CD4-positive, alpha-beta T cell (primary cell): ENCODE measurements at regions of chr11 and their contacts with region 1.

Region 1: DNA sequence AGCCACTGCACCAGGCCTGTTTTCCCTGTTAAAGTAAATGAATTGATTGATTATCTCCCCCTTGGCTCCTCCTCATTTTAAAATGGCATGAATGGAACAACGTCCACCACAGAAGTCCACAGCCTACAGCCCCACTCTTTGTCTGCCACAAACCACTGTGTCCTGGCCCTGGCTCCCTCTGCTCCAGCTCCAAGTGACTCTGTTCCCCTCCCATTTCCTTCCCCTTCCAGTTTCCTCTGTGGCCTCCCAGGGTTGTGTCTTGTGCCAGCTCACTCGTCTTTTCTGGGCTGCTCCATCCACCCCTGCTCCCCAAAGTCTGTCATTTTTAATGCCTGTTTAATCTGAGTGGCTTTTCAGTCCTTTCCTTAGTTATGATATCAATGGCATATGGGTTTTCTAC is 52.4 kb upstream of the CD5 start:
- DNase-seq: no peak
- ATAC-seq: no peak
- H3K4me3 ChIP-seq: no peak overlapping the region
- H3K4me3 Mint-ChIP-seq: no peak overlapping the region
- H3K27ac ChIP-seq: no peak overlapping the region
- H3K27ac Mint-ChIP-seq: peak overlapping the region; percentile 81
- H3K4me1 ChIP-seq: peaks cover 44% of the 10 kb centered on the region
- H3K4me1 Mint-ChIP-seq: peaks cover 76% of the 10 kb centered on the region
- H3K27me3 ChIP-seq: no peaks in the 10 kb centered on the region
- H3K27me3 Mint-ChIP-seq: no peaks in the 10 kb centered on the region
- CTCF ChIP-seq: no peak

Region 2: DNA sequence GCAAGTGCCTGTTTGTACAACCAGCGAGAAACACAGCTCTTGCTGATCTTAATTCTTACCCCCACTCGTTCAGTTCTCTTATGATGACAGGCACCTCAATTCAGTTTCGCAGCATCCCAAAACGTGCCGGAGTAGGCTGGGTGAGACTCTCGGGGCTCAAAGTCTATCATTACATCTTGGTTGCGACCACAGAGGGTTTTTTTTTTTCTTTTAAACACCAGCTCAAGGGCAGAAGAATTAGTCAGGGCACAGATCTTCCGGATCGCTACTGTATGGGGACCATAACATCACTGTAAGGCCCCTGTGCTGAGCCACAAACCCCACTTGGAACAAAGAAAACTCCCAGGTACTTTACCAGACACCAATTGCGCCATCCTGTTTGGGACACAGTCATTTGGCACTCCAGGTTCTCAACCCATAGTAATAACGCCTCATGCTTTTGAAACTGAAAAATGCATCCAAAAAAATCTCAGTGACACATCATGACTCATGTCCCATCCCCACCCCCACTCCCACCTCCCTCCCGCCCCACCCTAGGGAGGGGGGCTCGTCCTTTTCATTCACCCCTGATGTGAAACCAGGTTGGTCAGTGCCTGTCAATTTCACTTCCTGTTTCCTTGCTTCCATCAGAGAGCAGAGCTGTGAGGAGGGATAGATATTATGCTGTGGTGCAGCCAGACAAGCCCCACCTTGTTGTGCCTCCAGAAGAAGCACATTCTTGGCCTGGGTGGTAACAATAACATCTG is 11.4 kb after region 1 on chr11:
- CTCF ChIA-PET with region 1: interaction called, 6 read pairs
- POLR2A ChIA-PET with region 1: interaction called, 64 read pairs
- intact Hi-C with region 1: loop called in 1 of 2 experiments (anchors 2 kb)
- DNase-seq: peak; percentile 43 to 92 (median 72)
- ATAC-seq: peak; percentile 78
- H3K4me3 ChIP-seq: peak overlapping the region; percentile 36
- H3K4me3 Mint-ChIP-seq: peak overlapping the region; percentile 82
- H3K27ac ChIP-seq: peak overlapping the region; percentile 74 to 85
- H3K27ac Mint-ChIP-seq: peak overlapping the region; percentile 92
- H3K4me1 ChIP-seq: peaks cover 82% of the 10 kb centered on the region
- H3K4me1 Mint-ChIP-seq: peaks cover 76% of the 10 kb centered on the region
- H3K27me3 ChIP-seq: no peaks in the 10 kb centered on the region
- H3K27me3 Mint-ChIP-seq: no peaks in the 10 kb centered on the region
- CTCF ChIP-seq: no peak

Region 3: GRCh38 chr11:61122761-61123160 is 72.9 kb after region 1 on chr11:
- CTCF ChIA-PET with region 1: no interaction called
- POLR2A ChIA-PET with region 1: no interaction called
- intact Hi-C with region 1: no loop called
- DNase-seq: no peak
- ATAC-seq: no peak
- H3K4me3 ChIP-seq: no peak overlapping the region
- H3K4me3 Mint-ChIP-seq: no peak overlapping the region
- H3K27ac ChIP-seq: no peak overlapping the region
- H3K27ac Mint-ChIP-seq: peak overlapping the region; percentile 95
- H3K4me1 ChIP-seq: peaks cover 55% of the 10 kb centered on the region
- H3K4me1 Mint-ChIP-seq: peaks cover 75% of the 10 kb centered on the region
- H3K27me3 ChIP-seq: no peaks in the 10 kb centered on the region
- H3K27me3 Mint-ChIP-seq: no peaks in the 10 kb centered on the region
- CTCF ChIP-seq: no peak

Region 4: GRCh38 chr11:61488651-61489291 is 438.9 kb after region 1 on chr11:
- CTCF ChIA-PET with region 1: no interaction called
- POLR2A ChIA-PET with region 1: no interaction called
- intact Hi-C with region 1: no loop called
- DNase-seq: no peak
- ATAC-seq: no peak
- H3K4me3 ChIP-seq: no peak overlapping the region
- H3K4me3 Mint-ChIP-seq: no peak overlapping the region
- H3K27ac ChIP-seq: no peak overlapping the region
- H3K27ac Mint-ChIP-seq: no peak overlapping the region
- H3K4me1 ChIP-seq: no peaks in the 10 kb centered on the region
- H3K4me1 Mint-ChIP-seq: no peaks in the 10 kb centered on the region
- H3K27me3 ChIP-seq: no peaks in the 10 kb centered on the region
- H3K27me3 Mint-ChIP-seq: no peaks in the 10 kb centered on the region
- CTCF ChIP-seq: no peak